ENCODE measurements at regions of chr11 and their contacts with region 1.

Region 1: GRCh38 chr11:1832211-1832919 is 2.4 kb upstream of the SYT8 start:
- DNase-seq: peak; percentile 70
- ATAC-seq: peak; percentile 79
- H3K4me3 Mint-ChIP-seq: no peak overlapping the region
- H3K27ac Mint-ChIP-seq: no peak overlapping the region
- H3K4me1 Mint-ChIP-seq: no peaks in the 10 kb centered on the region
- H3K27me3 Mint-ChIP-seq: no peaks in the 10 kb centered on the region
- CTCF ChIP-seq: peak; percentile 97

Region 2: GRCh38 chr11:1701091-1701807 is 131.1 kb before region 1 on chr11:
- CTCF ChIA-PET with region 1: interaction called, 40 read pairs
- POLR2A ChIA-PET with region 1: no interaction called
- intact Hi-C with region 1: no loop called
- DNase-seq: peak; percentile 62
- ATAC-seq: peak; percentile 82
- H3K4me3 Mint-ChIP-seq: no peak overlapping the region
- H3K27ac Mint-ChIP-seq: peak overlapping the region; percentile 68
- H3K4me1 Mint-ChIP-seq: peaks cover 18% of the 10 kb centered on the region
- H3K27me3 Mint-ChIP-seq: no peaks in the 10 kb centered on the region
- CTCF ChIP-seq: no peak

Region 3: DNA sequence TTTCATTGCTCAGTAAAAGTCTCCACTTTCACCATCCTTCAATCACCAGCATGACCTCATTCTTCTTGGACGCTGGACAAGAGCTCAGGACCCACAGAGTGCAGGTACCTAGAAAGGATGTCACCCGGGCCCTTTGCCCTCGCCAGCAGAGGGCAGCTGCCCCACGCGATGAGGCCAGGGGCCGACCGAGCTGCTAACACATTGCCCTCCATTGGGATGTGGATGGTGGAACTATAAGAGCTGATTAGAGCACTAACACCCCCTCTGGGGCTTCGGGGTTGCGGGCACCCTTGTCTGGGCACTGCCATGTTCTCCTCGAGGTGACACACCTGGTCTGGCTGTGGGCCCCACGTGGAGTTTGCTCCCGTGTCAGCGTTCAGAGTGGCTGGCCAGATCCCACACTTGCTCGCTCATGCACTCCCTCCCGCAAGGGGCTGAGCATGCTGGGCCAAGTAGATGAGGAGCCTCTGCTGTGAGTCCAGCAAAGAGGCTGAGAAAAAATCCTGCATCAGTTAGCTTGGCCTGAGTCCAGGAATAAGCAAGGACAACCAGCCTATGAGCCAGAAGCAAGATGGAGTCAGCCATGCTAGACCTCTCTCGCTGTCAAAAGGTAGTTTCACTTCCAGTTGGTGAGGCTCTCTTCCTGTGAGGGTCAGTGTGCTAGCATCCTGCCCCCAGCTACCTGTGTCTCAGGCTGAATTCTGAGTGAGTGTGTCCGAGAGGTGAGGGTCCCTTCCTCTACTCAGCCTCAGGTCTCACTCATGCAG is 125.5 kb before region 1 on chr11:
- CTCF ChIA-PET with region 1: interaction called, 40 read pairs
- POLR2A ChIA-PET with region 1: interaction called, 3 read pairs
- intact Hi-C with region 1: no loop called
- DNase-seq: peak; percentile 52
- ATAC-seq: peak; percentile 49
- H3K4me3 Mint-ChIP-seq: no peak overlapping the region
- H3K27ac Mint-ChIP-seq: no peak overlapping the region
- H3K4me1 Mint-ChIP-seq: peaks cover under 1% of the 10 kb centered on the region
- H3K27me3 Mint-ChIP-seq: no peaks in the 10 kb centered on the region
- CTCF ChIP-seq: peak; percentile 48

Region 4: GRCh38 chr11:1728931-1729691 is 103.3 kb before region 1 on chr11:
- CTCF ChIA-PET with region 1: interaction called, 12 read pairs
- POLR2A ChIA-PET with region 1: no interaction called
- intact Hi-C with region 1: no loop called
- DNase-seq: peak; percentile 65
- ATAC-seq: peak; percentile 72
- H3K4me3 Mint-ChIP-seq: peak overlapping the region; percentile 64
- H3K27ac Mint-ChIP-seq: peak overlapping the region; percentile 85
- H3K4me1 Mint-ChIP-seq: peaks cover 53% of the 10 kb centered on the region
- H3K27me3 Mint-ChIP-seq: peaks cover 8% of the 10 kb centered on the region
- CTCF ChIP-seq: no peak

Region 5: DNA sequence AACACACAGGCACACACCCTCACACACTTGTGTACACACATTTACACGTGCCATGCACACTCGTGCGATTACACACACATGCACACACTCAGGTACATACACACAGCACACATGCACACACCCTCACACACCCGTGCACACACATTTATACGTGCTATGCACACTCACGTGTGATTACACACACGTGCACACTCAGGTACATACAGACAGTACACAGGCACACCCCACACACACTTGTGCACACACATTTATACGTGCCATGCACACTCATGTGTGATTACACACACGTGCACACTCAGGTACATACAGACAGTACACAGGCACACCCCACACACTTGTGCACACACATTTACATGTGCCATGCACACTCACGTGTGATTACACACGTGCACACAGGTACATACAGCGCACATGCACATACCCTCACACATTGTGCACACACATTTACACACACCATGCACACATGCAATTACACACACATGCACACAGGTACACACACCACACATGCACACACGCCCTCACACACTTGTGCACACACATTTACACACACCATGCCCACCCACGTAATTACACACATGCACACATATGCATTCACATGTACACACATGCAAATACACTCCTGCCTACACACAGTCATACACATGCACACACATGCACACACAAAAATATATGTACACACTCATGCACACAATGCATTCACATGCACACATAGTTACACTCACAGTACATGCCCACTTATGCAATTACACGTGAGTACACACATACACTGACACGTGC is 86.5 kb before region 1 on chr11:
- CTCF ChIA-PET with region 1: no interaction called
- POLR2A ChIA-PET with region 1: no interaction called
- intact Hi-C with region 1: no loop called
- DNase-seq: no peak
- ATAC-seq: no peak
- H3K4me3 Mint-ChIP-seq: no peak overlapping the region
- H3K27ac Mint-ChIP-seq: no peak overlapping the region
- H3K4me1 Mint-ChIP-seq: peaks cover 14% of the 10 kb centered on the region
- H3K27me3 Mint-ChIP-seq: peaks cover 15% of the 10 kb centered on the region
- CTCF ChIP-seq: no peak

Region 6: DNA sequence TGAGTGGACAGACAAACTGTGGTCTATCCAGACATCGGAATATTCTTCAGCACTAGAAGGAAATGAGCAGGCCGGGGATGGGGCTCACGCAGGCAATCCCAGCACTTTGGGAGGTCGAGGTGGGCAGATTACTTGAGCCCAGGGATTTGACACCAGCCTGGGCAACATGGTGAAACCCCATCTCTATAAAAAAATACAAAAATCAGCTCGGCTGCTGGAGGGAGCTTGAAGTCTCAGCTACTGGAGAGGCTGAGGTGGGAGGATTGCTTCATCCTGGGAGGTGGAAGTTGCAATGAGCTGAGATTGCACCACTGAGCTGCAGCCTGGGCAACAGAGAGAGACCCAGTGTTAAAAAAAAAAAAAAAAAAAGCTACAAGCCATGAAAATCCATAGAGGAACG is 60.7 kb before region 1 on chr11:
- CTCF ChIA-PET with region 1: no interaction called
- POLR2A ChIA-PET with region 1: no interaction called
- intact Hi-C with region 1: no loop called
- DNase-seq: peak; percentile 1
- ATAC-seq: no peak
- H3K4me3 Mint-ChIP-seq: no peak overlapping the region
- H3K27ac Mint-ChIP-seq: no peak overlapping the region
- H3K4me1 Mint-ChIP-seq: peaks cover 18% of the 10 kb centered on the region
- H3K27me3 Mint-ChIP-seq: no peaks in the 10 kb centered on the region
- CTCF ChIP-seq: no peak

Region 7: DNA sequence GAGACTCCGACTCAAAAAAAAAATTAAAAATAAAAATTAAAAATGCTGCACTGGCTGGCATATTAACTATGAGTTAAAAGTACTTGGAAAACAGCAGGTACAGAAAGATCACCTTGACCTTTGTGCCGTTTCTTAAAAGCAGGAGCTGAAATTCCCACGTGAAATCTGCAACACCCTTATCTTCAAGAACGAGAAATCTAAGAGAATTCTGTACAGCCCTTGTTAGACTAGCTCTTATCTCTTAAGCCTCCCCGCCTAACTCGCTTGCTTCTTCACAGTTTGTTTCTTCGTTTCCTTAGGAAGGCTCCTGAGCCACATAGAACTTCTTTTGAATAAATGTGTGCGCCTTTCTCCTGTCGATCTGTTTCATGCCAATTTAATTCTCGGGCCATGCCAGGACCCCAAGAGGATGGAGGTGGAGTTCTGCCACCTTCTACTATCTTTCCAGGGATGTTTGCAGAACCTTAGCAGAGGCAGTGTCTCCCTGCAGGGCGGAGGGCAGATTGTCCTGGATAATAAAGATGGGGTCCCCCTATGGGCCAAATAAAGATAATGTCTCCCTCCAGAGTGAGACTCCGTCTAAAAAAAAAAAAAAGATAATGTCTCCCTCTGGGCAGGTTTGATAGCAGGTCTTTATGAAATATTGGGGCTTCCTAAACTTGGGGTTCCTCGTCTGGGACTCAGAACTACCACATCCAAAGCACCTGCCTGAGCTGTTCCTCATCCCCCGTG is 24.9 kb before region 1 on chr11:
- CTCF ChIA-PET with region 1: interaction called, 21 read pairs
- POLR2A ChIA-PET with region 1: no interaction called
- intact Hi-C with region 1: no loop called
- DNase-seq: no peak
- ATAC-seq: peak; percentile 51
- H3K4me3 Mint-ChIP-seq: no peak overlapping the region
- H3K27ac Mint-ChIP-seq: no peak overlapping the region
- H3K4me1 Mint-ChIP-seq: no peaks in the 10 kb centered on the region
- H3K27me3 Mint-ChIP-seq: no peaks in the 10 kb centered on the region
- CTCF ChIP-seq: no peak

Region 8: DNA sequence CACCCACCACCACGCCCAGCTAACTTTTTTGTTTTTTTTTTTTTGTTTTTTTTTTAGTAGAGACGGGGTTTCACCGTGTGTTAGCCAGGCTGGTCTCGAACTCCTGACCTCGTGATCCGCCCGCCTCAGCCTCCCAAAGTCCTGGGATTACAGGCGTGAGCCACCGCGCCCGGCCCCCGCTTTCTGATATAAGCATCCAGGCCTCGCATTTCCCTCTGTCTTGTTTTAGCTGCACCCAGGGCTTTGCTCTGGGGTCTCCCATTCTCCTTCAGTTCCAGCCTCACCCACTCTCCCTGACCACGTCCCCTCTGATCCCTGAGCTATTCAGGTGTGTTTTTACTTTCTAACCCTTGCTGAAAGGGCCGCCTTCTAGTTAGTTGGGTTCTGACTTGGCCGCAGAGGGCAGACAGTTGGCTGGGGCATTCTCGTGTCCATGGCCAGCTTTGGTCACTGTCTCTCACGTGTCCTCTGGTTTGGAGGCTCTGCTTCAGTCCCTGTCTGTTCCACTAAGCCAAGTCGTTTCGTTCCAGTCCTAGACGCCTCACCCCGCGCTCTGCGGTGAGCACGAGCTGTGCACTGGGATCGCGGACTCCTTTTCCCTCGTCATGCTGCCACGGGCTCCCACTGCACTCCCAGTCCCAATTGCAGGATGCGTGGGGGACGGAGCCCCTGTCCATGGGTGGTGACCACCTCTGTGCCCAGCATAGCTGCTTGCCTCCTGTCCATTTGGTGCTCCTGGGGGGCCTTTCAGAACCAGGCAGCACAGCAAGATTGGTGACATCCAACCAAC is 81.1 kb after region 1 on chr11:
- CTCF ChIA-PET with region 1: no interaction called
- POLR2A ChIA-PET with region 1: no interaction called
- intact Hi-C with region 1: no loop called
- DNase-seq: no peak
- ATAC-seq: no peak
- H3K4me3 Mint-ChIP-seq: no peak overlapping the region
- H3K27ac Mint-ChIP-seq: no peak overlapping the region
- H3K4me1 Mint-ChIP-seq: peaks cover 17% of the 10 kb centered on the region
- H3K27me3 Mint-ChIP-seq: peaks cover 6% of the 10 kb centered on the region
- CTCF ChIP-seq: no peak

Measured in activated CD8-positive, alpha-beta T cell treated with anti-CD3 and anti-CD28 coated beads for 36 hours (primary cell).